ENCODE measurements at regions of chr9 and their contacts with region 1.

Region 1: GRCh38 chr9:127396808-127397497 is at the start of gene SLC2A8:
- H3K4me3 ChIP-seq: peak within 1 kb of the TSS; percentile 57
- H3K27ac ChIP-seq: peak within 1 kb of the TSS; percentile 82
- H3K4me1 ChIP-seq: 0 out of 2 replicates have a peak, but pooled peaks cover 5% of the 10 kb centered on the region
- CTCF ChIP-seq: no peak

Region 2: GRCh38 chr9:127224178-127224882 is 172.6 kb before region 1 on chr9:
- CTCF ChIA-PET with region 1: interaction called, 5 read pairs
- POLR2A ChIA-PET with region 1: interaction called, 35 read pairs
- H3K4me3 ChIP-seq: peak overlapping the region; percentile 61
- H3K27ac ChIP-seq: 0 out of 2 replicates have a peak overlapping the region, but pooled peaks have one; percentile 27
- H3K4me1 ChIP-seq: no peaks in the 10 kb centered on the region
- CTCF ChIP-seq: no peak

Region 3: GRCh38 chr9:127293328-127293727 is 103.6 kb before region 1 on chr9:
- CTCF ChIA-PET with region 1: interaction called, 3 read pairs
- POLR2A ChIA-PET with region 1: interaction called, 10 read pairs
- H3K4me3 ChIP-seq: no peak overlapping the region
- H3K27ac ChIP-seq: no peak overlapping the region
- H3K4me1 ChIP-seq: no peaks in the 10 kb centered on the region
- CTCF ChIP-seq: no peak

Region 4: GRCh38 chr9:127406799-127407509 is 10.0 kb after region 1 on chr9:
- CTCF ChIA-PET with region 1: interaction called, 7 read pairs
- POLR2A ChIA-PET with region 1: interaction called, 18 read pairs
- H3K4me3 ChIP-seq: no peak overlapping the region
- H3K27ac ChIP-seq: no peak overlapping the region
- H3K4me1 ChIP-seq: no peaks in the 10 kb centered on the region
- CTCF ChIP-seq: no peak

Region 5: GRCh38 chr9:127444921-127445850 is 48.2 kb after region 1 on chr9:
- CTCF ChIA-PET with region 1: no interaction called
- POLR2A ChIA-PET with region 1: interaction called, 38 read pairs
- H3K4me3 ChIP-seq: no peak overlapping the region
- H3K27ac ChIP-seq: no peak overlapping the region
- H3K4me1 ChIP-seq: no peaks in the 10 kb centered on the region
- CTCF ChIP-seq: no peak

Region 6: DNA sequence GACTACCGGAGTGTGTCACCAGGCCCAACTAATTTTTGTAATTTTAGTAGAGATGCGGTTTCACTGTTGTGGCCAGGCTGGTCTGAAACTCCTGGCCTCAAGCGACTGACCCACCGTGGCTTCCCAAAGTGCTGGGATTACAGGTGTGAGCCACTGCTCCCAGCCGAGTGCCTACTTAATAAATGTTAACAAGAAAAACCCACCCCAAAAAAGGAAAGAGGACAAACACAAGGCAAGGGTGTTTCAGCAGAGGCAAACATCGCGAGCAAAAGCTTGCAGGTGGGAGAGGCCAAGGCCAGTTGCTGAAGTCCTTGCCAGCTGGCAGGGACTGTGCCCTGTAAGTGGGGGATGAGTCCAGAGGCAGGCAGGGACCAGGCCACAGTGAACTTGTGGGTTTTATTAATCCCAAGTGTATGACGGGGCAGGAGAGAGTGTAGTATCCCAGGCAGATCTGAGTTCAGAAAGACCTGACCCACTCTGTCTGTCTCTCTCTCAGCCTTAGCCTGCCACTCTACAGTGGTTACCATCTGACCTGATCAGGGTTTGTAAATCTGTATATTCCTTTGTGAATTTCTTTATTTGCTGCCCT is 399.4 kb after region 1 on chr9:
- CTCF ChIA-PET with region 1: no interaction called
- POLR2A ChIA-PET with region 1: interaction called, 10 read pairs
- H3K4me3 ChIP-seq: no peak overlapping the region
- H3K27ac ChIP-seq: no peak overlapping the region
- H3K4me1 ChIP-seq: no peaks in the 10 kb centered on the region
- CTCF ChIP-seq: no peak